Heart right ventricle (tissue), 16 donors: ENCODE measurements at regions of chr7 and their contacts with region 1.

Region 1: GRCh38 chr7:137592232-137592896 is 248.8 kb upstream of the PTN start:
- DNase-seq: peak; percentile 28 to 55
- ATAC-seq: peak; percentile 73 to 93 (median 85)
- H3K4me3 ChIP-seq: no peak overlapping the region
- H3K27ac ChIP-seq: no peak overlapping the region
- H3K4me1 ChIP-seq: peaks cover 0 to 11% (median 7%) of the 10 kb centered on the region in 9 donors
- H3K27me3 ChIP-seq: no peaks in the 10 kb centered on the region
- CTCF ChIP-seq: peak; percentile 42 to 83 (median 72)

Region 2: GRCh38 chr7:135801045-135801693 is 1791.2 kb before region 1 on chr7:
- intact Hi-C with region 1: loop called in 1 of 10 experiments (anchors 10 kb)
- DNase-seq: peak in 1 of 2 donors; percentile 50
- ATAC-seq: peak; percentile 51 to 75 (median 64)
- H3K4me3 ChIP-seq: peak overlapping the region in 4 of 10 donors; percentile 11 to 14 (median 13)
- H3K27ac ChIP-seq: no peak overlapping the region
- H3K4me1 ChIP-seq: peaks cover 2 to 27% (median 13%) of the 10 kb centered on the region in 9 donors
- H3K27me3 ChIP-seq: no peaks in the 10 kb centered on the region
- CTCF ChIP-seq: peak; percentile 77 to 96 (median 87)

Region 3: GRCh38 chr7:136405931-136406777 is 1186.2 kb before region 1 on chr7:
- intact Hi-C with region 1: loop called in 3 of 10 experiments (anchors 5 to 10 kb)
- DNase-seq: peak in 1 of 2 donors; percentile 20
- ATAC-seq: peak in 6 of 8 donors; percentile 33 to 73 (median 61)
- H3K4me3 ChIP-seq: peak overlapping the region in 1 of 10 donors; percentile 9
- H3K27ac ChIP-seq: no peak overlapping the region
- H3K4me1 ChIP-seq: no peaks in the 10 kb centered on the region
- H3K27me3 ChIP-seq: peaks cover 0 to 4% (median 0%) of the 10 kb centered on the region in 7 donors
- CTCF ChIP-seq: peak; percentile 38 to 79 (median 75)

Region 4: GRCh38 chr7:136687693-136688322 is 904.6 kb before region 1 on chr7:
- intact Hi-C with region 1: loop called in 1 of 10 experiments (anchors 10 kb)
- DNase-seq: no peak
- ATAC-seq: no peak
- H3K4me3 ChIP-seq: no peak overlapping the region
- H3K27ac ChIP-seq: no peak overlapping the region
- H3K4me1 ChIP-seq: no peaks in the 10 kb centered on the region
- H3K27me3 ChIP-seq: no peaks in the 10 kb centered on the region
- CTCF ChIP-seq: peak in 7 of 9 donors; percentile 37 to 56 (median 50)

Region 5: DNA sequence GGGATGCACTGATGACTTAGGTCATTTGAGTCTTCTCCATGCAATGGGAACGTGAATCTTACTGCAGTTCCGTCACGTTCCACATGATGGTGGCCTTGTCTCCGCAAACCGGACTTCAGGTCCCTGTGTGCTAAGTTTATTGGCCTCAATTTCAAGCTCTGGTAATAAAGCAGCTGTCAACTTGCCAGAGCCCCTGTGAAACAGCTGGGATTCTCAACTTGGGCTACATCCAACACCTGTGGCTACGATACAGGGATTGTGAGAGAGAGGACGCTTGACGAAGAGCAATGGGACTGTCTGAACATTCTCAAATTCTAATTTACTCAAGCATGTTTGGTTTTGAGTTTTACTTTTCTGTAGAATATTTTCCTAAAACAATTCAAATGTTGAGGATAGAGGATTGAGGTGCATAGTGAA is 423.1 kb before region 1 on chr7:
- intact Hi-C with region 1: loop called in 9 of 10 experiments (anchors 1 to 10 kb)
- DNase-seq: peak; percentile 26 to 57
- ATAC-seq: peak; percentile 65 to 83 (median 72)
- H3K4me3 ChIP-seq: no peak overlapping the region
- H3K27ac ChIP-seq: no peak overlapping the region
- H3K4me1 ChIP-seq: peaks cover 0 to 4% (median 0%) of the 10 kb centered on the region in 9 donors
- H3K27me3 ChIP-seq: no peaks in the 10 kb centered on the region
- CTCF ChIP-seq: peak; percentile 36 to 78 (median 61)

Region 6: DNA sequence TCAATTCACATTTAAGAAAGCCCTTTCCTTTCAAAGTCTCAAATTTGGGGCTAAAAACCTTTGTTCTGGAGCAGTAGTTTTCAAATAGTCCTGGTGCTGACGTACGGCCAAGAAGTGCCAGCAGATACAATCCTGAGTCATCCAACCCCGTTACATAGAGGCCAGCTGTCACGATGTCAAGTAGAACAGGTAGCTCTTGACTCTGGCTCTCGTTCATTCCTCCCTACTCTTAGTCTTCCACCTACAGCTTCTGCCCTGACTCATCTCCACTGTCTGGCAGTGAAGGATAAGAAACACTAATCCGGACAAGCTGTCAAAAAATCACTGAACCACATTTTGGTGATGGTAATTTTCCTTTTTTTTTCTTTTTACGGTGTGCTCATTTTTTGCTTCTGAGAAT is 116.4 kb before region 1 on chr7:
- intact Hi-C with region 1: no loop called
- DNase-seq: no peak
- ATAC-seq: no peak
- H3K4me3 ChIP-seq: no peak overlapping the region
- H3K27ac ChIP-seq: no peak overlapping the region
- H3K4me1 ChIP-seq: no peaks in the 10 kb centered on the region
- H3K27me3 ChIP-seq: no peaks in the 10 kb centered on the region
- CTCF ChIP-seq: no peak